ENCODE measurements at regions of chr20 and their contacts with region 1.

Region 1: DNA sequence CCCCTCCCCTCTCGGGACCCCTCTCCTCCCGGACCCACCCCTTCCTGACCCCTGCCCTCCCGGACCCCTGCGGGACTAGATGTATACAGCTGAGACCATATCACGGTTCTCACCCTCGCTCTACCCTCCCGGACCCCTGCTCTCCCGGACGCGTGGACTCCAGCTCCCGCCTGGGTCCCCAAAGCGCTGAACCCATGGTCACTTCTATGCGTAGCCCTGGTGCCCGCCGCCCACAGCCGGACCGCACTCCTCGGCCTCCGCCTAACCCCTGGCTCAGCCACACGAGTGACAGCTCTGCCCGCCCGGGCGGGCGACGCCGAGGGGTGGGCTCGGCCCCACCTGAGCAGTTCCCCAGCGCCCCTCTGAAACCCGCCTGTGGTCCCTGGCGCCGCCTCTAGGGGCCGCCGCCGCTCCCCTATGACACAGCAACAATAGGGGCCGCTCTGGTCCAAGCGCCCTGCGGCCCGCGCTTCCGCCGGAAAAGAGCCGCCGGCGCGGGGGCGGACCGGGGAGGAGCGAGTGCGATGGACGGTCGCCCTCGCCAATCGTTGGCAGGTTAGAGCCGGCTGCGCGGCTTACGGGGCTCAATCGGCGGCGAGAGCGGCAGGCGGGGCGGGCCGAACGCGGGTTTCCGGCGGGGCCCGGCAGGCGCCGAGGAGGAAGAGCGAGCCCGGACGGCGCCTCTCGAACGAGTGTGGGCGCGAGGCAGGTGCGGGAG is at the start of gene ADRM1:
- DNase-seq: peak; percentile 97 to 98
- ATAC-seq: peak; percentile 82 to 94 (median 88)
- H3K4me3 ChIP-seq: peak within 1 kb of the TSS; percentile 63
- H3K4me3 Mint-ChIP-seq: peak within 1 kb of the TSS; percentile 99
- H3K27ac ChIP-seq: peak within 1 kb of the TSS; percentile 94
- H3K27ac Mint-ChIP-seq: peak within 1 kb of the TSS; percentile 98 to 99
- H3K4me1 ChIP-seq: peaks cover 34% of the 10 kb centered on the region
- H3K4me1 Mint-ChIP-seq: peaks cover 28 to 43% of the 10 kb centered on the region in 2 donors
- H3K27me3 ChIP-seq: no peaks in the 10 kb centered on the region
- H3K27me3 Mint-ChIP-seq: no peaks in the 10 kb centered on the region
- CTCF ChIP-seq: peak; percentile 70
- total RNA-seq, gene ADRM1: 81.4 to 88.4 (median 84.6) TPM

Region 2: GRCh38 chr20:62237801-62238571 is 64.5 kb before region 1 on chr20 and contains the start of gene OSBPL2:
- intact Hi-C with region 1: loop called (anchors 5 kb)
- DNase-seq: peak; percentile 100
- ATAC-seq: peak; percentile 97 to 100 (median 97)
- H3K4me3 ChIP-seq: peak within 1 kb of the TSS; percentile 50
- H3K4me3 Mint-ChIP-seq: peak within 1 kb of the TSS; percentile 89
- H3K27ac ChIP-seq: peak within 1 kb of the TSS; percentile 65
- H3K27ac Mint-ChIP-seq: peak within 1 kb of the TSS; percentile 84 to 93
- H3K4me1 ChIP-seq: peaks cover 33% of the 10 kb centered on the region
- H3K4me1 Mint-ChIP-seq: peaks cover 44% of the 10 kb centered on the region in 2 donors
- H3K27me3 ChIP-seq: no peaks in the 10 kb centered on the region
- H3K27me3 Mint-ChIP-seq: peaks cover 0 to 4% of the 10 kb centered on the region in 2 donors
- CTCF ChIP-seq: no peak
- total RNA-seq, gene OSBPL2: 77.9 to 112 (median 104) TPM

Region 3: DNA sequence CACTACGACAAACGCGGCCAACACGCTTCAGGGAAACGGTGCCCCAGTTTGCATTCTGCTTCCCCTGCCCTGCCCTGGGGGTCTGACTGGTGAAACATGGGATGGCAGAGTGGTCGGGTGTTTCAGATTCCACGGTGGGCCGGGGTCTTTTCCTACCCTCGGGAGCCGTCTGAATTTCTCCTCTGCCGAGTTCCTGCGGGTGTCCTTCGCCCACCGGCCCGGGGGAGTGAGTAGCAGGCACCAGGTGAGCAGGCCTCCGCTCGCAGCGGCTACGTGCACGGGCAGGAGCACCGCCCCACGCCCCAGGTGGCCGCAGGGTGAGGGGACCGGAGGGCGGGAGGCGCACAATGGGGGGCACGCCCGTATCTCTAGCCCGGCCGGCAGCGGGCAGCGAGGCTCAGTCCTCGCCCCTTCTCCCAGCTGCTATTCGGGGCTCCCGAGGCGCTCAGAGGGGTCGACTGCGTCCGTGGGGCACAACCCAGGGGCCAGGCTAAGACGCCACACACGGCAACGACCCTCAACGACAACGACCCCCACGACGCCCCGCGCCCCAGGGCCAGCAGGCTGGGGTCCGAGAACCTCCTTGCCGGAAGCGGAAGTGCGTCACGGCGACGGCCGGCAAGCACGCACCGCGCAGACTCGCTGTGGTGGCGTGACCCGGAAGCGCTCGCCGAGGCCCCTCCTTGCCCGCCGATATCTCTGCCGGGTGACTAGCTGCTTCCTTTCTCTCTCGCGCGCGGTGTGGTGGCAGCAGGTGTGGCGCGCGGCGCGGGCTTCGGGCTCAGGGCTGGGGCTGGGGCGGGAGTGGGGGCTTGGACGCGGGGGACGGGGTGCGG is 84.1 kb after region 1 on chr20 and contains the start of gene RPS21:
- intact Hi-C with region 1: loop called (anchors 1 kb)
- DNase-seq: peak; percentile 93 to 97
- ATAC-seq: peak; percentile 95
- H3K4me3 ChIP-seq: peak within 1 kb of the TSS; percentile 89
- H3K4me3 Mint-ChIP-seq: peak within 1 kb of the TSS; percentile 87
- H3K27ac ChIP-seq: peak within 1 kb of the TSS; percentile 97
- H3K27ac Mint-ChIP-seq: peak within 1 kb of the TSS; percentile 84 to 94
- H3K4me1 ChIP-seq: peaks cover 29% of the 10 kb centered on the region
- H3K4me1 Mint-ChIP-seq: peaks cover 31 to 54% of the 10 kb centered on the region in 2 donors
- H3K27me3 ChIP-seq: no peaks in the 10 kb centered on the region
- H3K27me3 Mint-ChIP-seq: no peaks in the 10 kb centered on the region
- CTCF ChIP-seq: no peak
- total RNA-seq, gene RPS21: 887 to 1,244 (median 1,112) TPM

Region 4: DNA sequence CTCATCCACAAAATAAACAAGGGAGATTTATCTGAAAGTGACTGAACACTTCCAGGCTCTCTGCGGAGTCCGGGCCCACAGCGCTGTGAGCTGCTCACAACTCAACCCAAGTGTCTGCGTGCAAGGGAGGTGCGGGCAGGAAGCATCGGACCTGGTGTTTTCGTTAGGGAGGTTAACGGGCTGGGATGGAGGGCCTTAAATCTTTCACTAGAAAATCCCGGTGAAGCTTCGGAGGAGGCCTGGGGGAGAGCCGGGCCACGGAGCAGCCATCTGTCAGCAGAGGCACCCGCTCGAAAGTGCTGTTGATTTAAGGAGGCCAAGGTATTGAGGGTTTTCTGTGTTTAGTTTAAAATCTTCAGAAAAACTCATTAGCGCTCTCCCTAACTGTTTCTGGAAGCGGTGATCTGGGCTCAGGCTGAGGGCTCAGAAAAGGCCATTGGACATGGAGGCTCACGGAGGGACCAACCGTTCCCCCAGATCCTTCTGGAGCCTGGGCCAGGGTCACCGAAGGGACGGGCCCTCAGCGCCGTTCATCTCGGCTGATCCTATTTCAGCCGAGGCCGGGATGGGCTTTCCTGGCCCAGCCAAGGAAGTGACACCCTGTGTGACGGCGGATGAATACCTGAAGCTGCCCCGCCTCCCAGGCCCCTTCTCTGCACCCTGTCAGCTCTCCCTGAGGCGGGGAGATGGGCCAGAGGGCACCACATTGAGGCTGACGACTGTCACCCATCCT is 152.6 kb after region 1 on chr20:
- intact Hi-C with region 1: no loop called
- DNase-seq: no peak
- ATAC-seq: no peak
- H3K4me3 ChIP-seq: no peak overlapping the region
- H3K4me3 Mint-ChIP-seq: no peak overlapping the region
- H3K27ac ChIP-seq: no peak overlapping the region
- H3K27ac Mint-ChIP-seq: no peak overlapping the region
- H3K4me1 ChIP-seq: no peaks in the 10 kb centered on the region
- H3K4me1 Mint-ChIP-seq: no peaks in the 10 kb centered on the region
- H3K27me3 ChIP-seq: no peaks in the 10 kb centered on the region
- H3K27me3 Mint-ChIP-seq: peaks cover 0 to 7% of the 10 kb centered on the region in 2 donors
- CTCF ChIP-seq: no peak

Region 5: DNA sequence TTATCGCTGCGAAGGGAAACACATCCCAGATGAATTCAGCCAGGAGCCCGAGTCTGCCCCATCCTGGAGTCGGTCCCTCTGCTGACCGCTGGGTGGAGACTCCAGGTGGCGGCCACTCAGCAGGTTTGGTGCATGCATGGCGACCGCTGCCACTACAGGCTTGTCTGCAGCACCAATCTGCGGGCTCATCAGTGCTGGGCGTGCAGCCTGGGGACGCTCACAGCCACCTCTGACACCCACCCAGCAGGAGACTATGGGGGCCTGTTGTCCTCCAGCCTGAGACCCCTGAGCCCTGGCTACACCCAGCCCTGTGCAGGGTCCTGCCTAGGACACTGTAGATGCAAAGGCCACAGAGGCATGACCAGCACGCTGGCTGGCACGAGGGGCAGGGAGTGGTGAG is 213.8 kb after region 1 on chr20:
- intact Hi-C with region 1: no loop called
- DNase-seq: no peak
- ATAC-seq: no peak
- H3K4me3 ChIP-seq: no peak overlapping the region
- H3K4me3 Mint-ChIP-seq: no peak overlapping the region
- H3K27ac ChIP-seq: no peak overlapping the region
- H3K27ac Mint-ChIP-seq: no peak overlapping the region
- H3K4me1 ChIP-seq: peaks cover 11% of the 10 kb centered on the region
- H3K4me1 Mint-ChIP-seq: no peaks in the 10 kb centered on the region
- H3K27me3 ChIP-seq: peaks cover 5% of the 10 kb centered on the region
- H3K27me3 Mint-ChIP-seq: peaks cover 0 to 12% of the 10 kb centered on the region in 2 donors
- CTCF ChIP-seq: no peak